ENCODE measurements at regions of chr3 and their contacts with region 1.

Region 1: GRCh38 chr3:8416965-8417364 is 84.7 kb upstream of the LMCD1 start:
- DNase-seq: peak in 1 of 2 experiments; percentile 50
- H3K4me3 ChIP-seq: no peak overlapping the region
- H3K27ac ChIP-seq: no peak overlapping the region
- H3K4me1 ChIP-seq: no peaks in the 10 kb centered on the region
- H3K27me3 ChIP-seq: no peaks in the 10 kb centered on the region
- CTCF ChIP-seq: no peak
- EP300 ChIP-seq: no peak
- POLR2A ChIP-seq: no peak
- RAD21 ChIP-seq: no peak

Region 2: GRCh38 chr3:8324740-8325139 is 92.2 kb before region 1 on chr3:
- CTCF ChIA-PET with region 1: interaction called, 86 read pairs
- POLR2A ChIA-PET with region 1: interaction called, 4 read pairs
- DNase-seq: peak in 1 of 2 experiments; percentile 68
- H3K4me3 ChIP-seq: no peak overlapping the region
- H3K27ac ChIP-seq: no peak overlapping the region
- H3K4me1 ChIP-seq: peaks cover 6 to 11% (median 7%) of the 10 kb centered on the region in 4 experiments; a peak in 6 of 7 replicates
- H3K27me3 ChIP-seq: no peaks in the 10 kb centered on the region
- CTCF ChIP-seq: peak; percentile 67 to 85 (median 78)
- EP300 ChIP-seq: no peak
- POLR2A ChIP-seq: no peak
- RAD21 ChIP-seq: peak; percentile 76

Region 3: GRCh38 chr3:8359133-8359532 is 57.8 kb before region 1 on chr3:
- CTCF ChIA-PET with region 1: interaction called, 10 read pairs
- POLR2A ChIA-PET with region 1: no interaction called
- DNase-seq: no peak
- H3K4me3 ChIP-seq: no peak overlapping the region
- H3K27ac ChIP-seq: no peak overlapping the region
- H3K4me1 ChIP-seq: peaks cover 0 to 3% (median 0%) of the 10 kb centered on the region in 4 experiments; a peak in 2 of 7 replicates
- H3K27me3 ChIP-seq: no peaks in the 10 kb centered on the region
- CTCF ChIP-seq: no peak
- EP300 ChIP-seq: no peak
- POLR2A ChIP-seq: no peak
- RAD21 ChIP-seq: no peak

Region 4: GRCh38 chr3:8400911-8401310 is 16.1 kb before region 1 on chr3:
- CTCF ChIA-PET with region 1: interaction called, 26 read pairs
- POLR2A ChIA-PET with region 1: interaction called, 3 read pairs
- DNase-seq: no peak
- H3K4me3 ChIP-seq: no peak overlapping the region
- H3K27ac ChIP-seq: no peak overlapping the region
- H3K4me1 ChIP-seq: no peaks in the 10 kb centered on the region
- H3K27me3 ChIP-seq: no peaks in the 10 kb centered on the region
- CTCF ChIP-seq: no peak
- EP300 ChIP-seq: no peak
- POLR2A ChIP-seq: no peak
- RAD21 ChIP-seq: no peak

Region 5: GRCh38 chr3:8436718-8437184 is 19.8 kb after region 1 on chr3:
- CTCF ChIA-PET with region 1: interaction called, 10 read pairs
- POLR2A ChIA-PET with region 1: no interaction called
- DNase-seq: no peak
- H3K4me3 ChIP-seq: no peak overlapping the region
- H3K27ac ChIP-seq: no peak overlapping the region
- H3K4me1 ChIP-seq: no peaks in the 10 kb centered on the region
- H3K27me3 ChIP-seq: no peaks in the 10 kb centered on the region
- CTCF ChIP-seq: no peak
- EP300 ChIP-seq: no peak
- POLR2A ChIP-seq: no peak
- RAD21 ChIP-seq: no peak

Measured in H1 (cell line).